ENCODE measurements at regions of chr17 and their contacts with region 1.

Region 1: DNA sequence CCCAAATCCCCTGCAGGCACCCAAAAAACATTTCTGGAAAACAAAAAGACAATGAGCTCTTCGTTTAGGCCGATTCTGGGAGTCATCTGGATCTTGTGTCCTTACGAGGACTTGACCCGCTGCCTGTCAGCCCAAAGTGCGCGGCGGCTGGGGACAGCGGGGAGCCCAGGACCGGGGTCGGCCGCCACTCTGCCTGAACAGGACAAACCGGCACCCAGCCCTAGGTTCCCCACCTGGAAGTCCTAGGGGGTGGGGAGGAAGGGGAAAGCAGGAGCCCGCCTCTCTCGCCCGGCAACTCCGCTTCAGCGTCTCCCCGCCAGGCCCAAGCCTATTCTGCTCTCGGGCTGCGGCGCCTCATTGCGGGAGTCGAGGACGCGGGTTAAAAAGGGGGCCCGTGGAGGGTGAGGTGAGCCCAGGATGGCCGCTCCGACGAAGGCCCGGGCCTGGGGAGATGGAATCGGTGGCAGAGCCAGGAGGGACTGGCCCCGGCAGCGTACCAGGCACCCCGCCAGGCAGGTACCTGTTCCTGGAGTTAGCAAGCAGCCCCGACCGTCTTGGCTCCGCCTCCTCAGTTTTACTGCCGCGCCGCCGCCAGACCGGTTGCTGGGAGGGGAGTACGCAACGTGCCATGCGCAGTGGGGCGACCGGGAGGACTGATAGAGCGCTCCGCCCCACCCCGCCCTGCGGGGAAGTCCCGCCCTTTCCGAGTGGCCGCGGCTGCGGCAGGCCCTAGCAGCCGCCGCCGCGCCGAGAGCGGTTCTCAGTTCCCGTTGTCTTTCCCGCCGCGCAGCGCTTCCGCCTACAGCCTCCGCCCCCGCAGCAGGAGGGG is at the start of gene STRADA:
- DNase-seq: peak; percentile 99
- H3K4me3 Mint-ChIP-seq: peak within 1 kb of the TSS; percentile 98
- H3K27ac Mint-ChIP-seq: peak within 1 kb of the TSS; percentile 97
- H3K4me1 Mint-ChIP-seq: peaks cover 25% of the 10 kb centered on the region
- H3K27me3 Mint-ChIP-seq: no peaks in the 10 kb centered on the region
- total RNA-seq, gene STRADA: 59.1 and 59.4 TPM in 2 replicates

Region 2: DNA sequence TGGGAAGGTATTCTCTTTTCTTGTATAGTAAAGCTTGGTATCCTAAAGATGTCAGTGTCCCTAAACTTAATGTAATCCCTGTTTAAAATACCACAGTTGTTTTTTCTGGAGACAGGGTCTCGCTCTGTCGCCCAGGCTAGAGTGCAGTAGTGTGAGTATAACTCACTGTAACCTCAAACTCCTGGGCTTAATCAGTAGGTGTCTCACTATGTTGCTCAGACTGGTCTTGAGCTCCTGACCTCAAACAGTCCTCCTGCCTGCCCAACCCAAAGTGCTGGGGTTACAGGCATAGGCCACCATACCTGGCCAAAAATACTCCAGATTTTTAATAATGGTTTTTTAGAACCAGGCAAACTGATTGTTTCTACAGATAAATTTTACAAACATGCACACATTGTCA is 183.0 kb before region 1 on chr17:
- intact Hi-C with region 1: no loop called
- DNase-seq: no peak
- H3K4me3 Mint-ChIP-seq: no peak overlapping the region
- H3K27ac Mint-ChIP-seq: no peak overlapping the region
- H3K4me1 Mint-ChIP-seq: peaks cover 49% of the 10 kb centered on the region
- H3K27me3 Mint-ChIP-seq: no peaks in the 10 kb centered on the region

Region 3: DNA sequence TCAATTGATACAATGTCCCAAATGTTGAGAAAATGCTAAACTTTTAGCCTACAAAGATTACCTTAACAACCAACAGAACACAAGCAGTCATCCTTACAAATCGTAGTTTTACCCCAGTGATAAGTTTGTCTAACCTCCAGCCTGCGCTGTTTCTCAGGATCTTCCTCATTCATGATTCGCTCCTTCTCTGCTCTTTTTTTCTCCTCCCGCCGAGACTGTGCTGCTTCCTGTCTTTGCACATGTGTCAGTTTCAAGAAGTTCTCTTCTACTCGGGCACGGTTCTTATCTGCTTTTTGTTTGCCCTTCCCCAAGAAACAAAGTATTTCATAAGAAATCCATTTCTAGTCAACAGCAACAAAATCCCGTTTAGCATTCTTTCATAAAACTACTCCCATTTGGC is 10.4 kb after region 1 on chr17:
- intact Hi-C with region 1: loop called (anchors 1 kb)
- DNase-seq: no peak
- H3K4me3 Mint-ChIP-seq: peak overlapping the region; percentile 46
- H3K27ac Mint-ChIP-seq: peak overlapping the region; percentile 83
- H3K4me1 Mint-ChIP-seq: peaks cover 16% of the 10 kb centered on the region
- H3K27me3 Mint-ChIP-seq: no peaks in the 10 kb centered on the region

Region 4: GRCh38 chr17:63773381-63774140 is 32.1 kb after region 1 on chr17 and contains the start of gene CCDC47:
- intact Hi-C with region 1: loop called (anchors 1 kb)
- DNase-seq: peak; percentile 99
- H3K4me3 Mint-ChIP-seq: peak within 1 kb of the TSS; percentile 96
- H3K27ac Mint-ChIP-seq: peak within 1 kb of the TSS; percentile 100
- H3K4me1 Mint-ChIP-seq: peaks cover 63% of the 10 kb centered on the region
- H3K27me3 Mint-ChIP-seq: no peaks in the 10 kb centered on the region
- total RNA-seq, gene CCDC47: 74.8 and 79.2 TPM in 2 replicates